Prostate gland (tissue), 2 donors: ENCODE measurements at regions of chr9 and their contacts with region 1.

Region 1: DNA sequence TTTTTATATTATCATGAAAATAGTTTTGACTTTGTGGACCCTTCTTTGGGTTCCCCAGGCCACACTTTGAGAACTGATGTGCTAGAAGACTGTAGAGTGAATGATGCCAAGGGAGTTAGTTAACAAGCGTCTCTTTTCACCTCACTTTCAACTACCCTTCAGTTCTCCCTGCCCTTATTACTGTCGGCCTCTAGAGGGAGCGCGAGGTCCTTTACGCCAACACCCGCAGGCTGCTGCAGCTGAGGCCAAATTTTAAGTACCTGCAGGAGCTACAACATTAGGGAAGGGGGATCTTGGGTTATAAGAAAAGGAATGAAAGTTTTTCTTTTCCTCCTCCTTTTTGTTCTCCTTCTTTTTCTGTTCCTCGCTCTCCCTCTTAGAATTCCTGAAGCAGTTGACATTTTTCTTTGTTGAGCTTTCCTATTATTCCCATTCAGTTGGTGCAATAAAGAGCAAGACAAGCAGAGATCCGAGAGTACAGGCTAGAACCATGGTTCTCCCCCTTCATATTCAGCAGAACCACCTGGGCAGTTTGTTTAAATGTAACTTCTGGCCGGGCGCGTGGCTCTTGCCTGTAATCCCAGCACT is 84.0 kb downstream of the ZFAND5 start:
- DNase-seq: peak; percentile 74
- H3K4me3 ChIP-seq: no peak overlapping the region
- H3K27ac ChIP-seq: no peak overlapping the region
- H3K4me1 ChIP-seq: no peaks in the 10 kb centered on the region
- H3K27me3 ChIP-seq: no peaks in the 10 kb centered on the region
- CTCF ChIP-seq: peak; percentile 52 to 91 (median 84)
- POLR2A ChIP-seq: no peak

Region 2: DNA sequence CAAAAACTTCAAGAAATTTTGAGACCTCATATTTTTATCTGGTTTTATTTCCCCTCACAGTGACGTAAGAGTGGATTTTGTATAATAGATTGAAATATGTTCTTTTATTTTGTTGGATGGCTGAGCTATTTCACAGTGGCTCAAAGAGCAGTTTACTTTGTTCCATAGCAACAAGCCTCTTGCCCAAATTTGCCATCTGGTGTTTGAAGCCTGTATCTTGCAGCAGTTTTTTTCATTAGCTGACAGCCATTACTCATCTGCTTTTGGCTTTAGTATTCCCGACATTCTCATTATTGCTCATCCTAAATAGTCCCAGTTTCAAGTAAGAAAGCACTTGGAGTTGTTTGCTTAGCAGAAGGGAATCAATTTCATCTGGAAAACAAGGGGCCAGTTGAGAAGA is 95.4 kb before region 1 on chr9:
- intact Hi-C with region 1: no loop called
- DNase-seq: no peak
- H3K4me3 ChIP-seq: no peak overlapping the region
- H3K27ac ChIP-seq: no peak overlapping the region
- H3K4me1 ChIP-seq: no peaks in the 10 kb centered on the region
- H3K27me3 ChIP-seq: no peaks in the 10 kb centered on the region
- CTCF ChIP-seq: no peak
- POLR2A ChIP-seq: no peak

Region 3: GRCh38 chr9:72753266-72753893 is 472.4 kb after region 1 on chr9:
- intact Hi-C with region 1: loop called (anchors 5 kb)
- DNase-seq: no peak
- H3K4me3 ChIP-seq: no peak overlapping the region
- H3K27ac ChIP-seq: no peak overlapping the region
- H3K4me1 ChIP-seq: no peaks in the 10 kb centered on the region
- H3K27me3 ChIP-seq: no peaks in the 10 kb centered on the region
- CTCF ChIP-seq: peak in 2 of 4 experiments; percentile 38 to 43
- POLR2A ChIP-seq: no peak